Activated CD4-positive, alpha-beta T cell treated with anti-CD3 and anti-CD28 coated beads for 36 hours (primary cell): ENCODE measurements at regions of chr9 and their contacts with region 1.

Region 1: GRCh38 chr9:128786681-128787601 is at the start of gene TBC1D13:
- DNase-seq: peak; percentile 94
- ATAC-seq: peak; percentile 97
- H3K4me3 Mint-ChIP-seq: peak within 1 kb of the TSS; percentile 87
- H3K27ac Mint-ChIP-seq: peak within 1 kb of the TSS; percentile 87
- H3K4me1 Mint-ChIP-seq: peaks cover 18% of the 10 kb centered on the region
- H3K27me3 Mint-ChIP-seq: no peaks in the 10 kb centered on the region
- total RNA-seq, gene TBC1D13: 10.5 to 14.0 TPM

Region 2: GRCh38 chr9:128688512-128689292 is 98.2 kb before region 1 on chr9 and contains the start of gene SET:
- CTCF ChIA-PET with region 1: no interaction called
- POLR2A ChIA-PET with region 1: no interaction called
- intact Hi-C with region 1: loop called in 1 of 2 experiments (anchors 2 kb)
- DNase-seq: peak; percentile 96
- ATAC-seq: peak; percentile 71
- H3K4me3 Mint-ChIP-seq: peak within 1 kb of the TSS; percentile 99
- H3K27ac Mint-ChIP-seq: peak within 1 kb of the TSS; percentile 94
- H3K4me1 Mint-ChIP-seq: peaks cover 61% of the 10 kb centered on the region
- H3K27me3 Mint-ChIP-seq: no peaks in the 10 kb centered on the region
- total RNA-seq, gene SET: 673 to 682 TPM

Region 3: DNA sequence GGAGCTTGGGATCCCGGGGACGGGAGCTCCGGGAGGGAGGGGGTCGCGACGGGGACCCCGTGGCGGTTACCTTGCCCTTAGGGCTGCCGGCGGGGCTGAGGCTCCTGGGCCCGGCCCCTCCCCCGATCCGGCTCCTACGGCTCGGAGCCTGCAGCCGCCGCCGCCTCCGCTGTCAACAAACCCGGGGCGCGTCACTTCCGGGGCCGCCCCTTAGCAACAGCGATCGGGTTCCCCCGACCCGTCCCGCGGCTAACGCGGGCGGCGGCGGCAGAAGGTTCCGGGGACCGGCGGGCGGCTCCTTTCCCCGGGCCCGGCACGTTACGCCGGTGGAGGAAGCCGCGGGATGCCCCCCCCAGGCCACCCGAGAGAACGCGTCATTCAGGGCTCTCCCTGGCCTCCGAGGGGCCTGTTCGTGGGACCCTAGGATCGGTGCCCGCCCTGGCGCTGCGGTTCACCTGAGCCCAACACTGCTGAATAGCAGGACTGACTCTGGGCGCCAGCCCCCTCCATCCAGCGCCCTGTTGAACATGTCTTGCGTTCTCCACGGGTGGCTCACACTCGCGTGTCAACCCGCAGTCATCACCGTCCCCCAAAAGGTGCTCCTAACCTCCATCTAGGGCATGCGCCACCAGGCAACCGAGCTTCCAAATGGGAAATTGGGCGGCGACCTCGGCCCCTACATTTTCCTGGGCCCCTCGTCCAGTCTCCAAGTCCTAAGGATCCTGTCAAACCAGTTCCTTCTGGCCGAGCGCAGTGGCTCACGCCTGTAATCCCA is 15.0 kb before region 1 on chr9 and contains the start of gene ZER1:
- CTCF ChIA-PET with region 1: interaction called, 11 read pairs
- POLR2A ChIA-PET with region 1: interaction called, 3 read pairs
- intact Hi-C with region 1: loop called (anchors 1 kb)
- DNase-seq: peak; percentile 97
- ATAC-seq: peak; percentile 94
- H3K4me3 Mint-ChIP-seq: peak within 1 kb of the TSS; percentile 82
- H3K27ac Mint-ChIP-seq: peak within 1 kb of the TSS; percentile 86
- H3K4me1 Mint-ChIP-seq: peaks cover 18% of the 10 kb centered on the region
- H3K27me3 Mint-ChIP-seq: no peaks in the 10 kb centered on the region
- total RNA-seq, gene ZER1: 17.1 to 19.3 TPM

Region 4: GRCh38 chr9:128887914-128888350 is 101.0 kb after region 1 on chr9:
- CTCF ChIA-PET with region 1: no interaction called
- POLR2A ChIA-PET with region 1: no interaction called
- intact Hi-C with region 1: no loop called
- DNase-seq: no peak
- ATAC-seq: no peak
- H3K4me3 Mint-ChIP-seq: no peak overlapping the region
- H3K27ac Mint-ChIP-seq: peak overlapping the region; percentile 47
- H3K4me1 Mint-ChIP-seq: peaks cover 59% of the 10 kb centered on the region
- H3K27me3 Mint-ChIP-seq: no peaks in the 10 kb centered on the region

Region 5: DNA sequence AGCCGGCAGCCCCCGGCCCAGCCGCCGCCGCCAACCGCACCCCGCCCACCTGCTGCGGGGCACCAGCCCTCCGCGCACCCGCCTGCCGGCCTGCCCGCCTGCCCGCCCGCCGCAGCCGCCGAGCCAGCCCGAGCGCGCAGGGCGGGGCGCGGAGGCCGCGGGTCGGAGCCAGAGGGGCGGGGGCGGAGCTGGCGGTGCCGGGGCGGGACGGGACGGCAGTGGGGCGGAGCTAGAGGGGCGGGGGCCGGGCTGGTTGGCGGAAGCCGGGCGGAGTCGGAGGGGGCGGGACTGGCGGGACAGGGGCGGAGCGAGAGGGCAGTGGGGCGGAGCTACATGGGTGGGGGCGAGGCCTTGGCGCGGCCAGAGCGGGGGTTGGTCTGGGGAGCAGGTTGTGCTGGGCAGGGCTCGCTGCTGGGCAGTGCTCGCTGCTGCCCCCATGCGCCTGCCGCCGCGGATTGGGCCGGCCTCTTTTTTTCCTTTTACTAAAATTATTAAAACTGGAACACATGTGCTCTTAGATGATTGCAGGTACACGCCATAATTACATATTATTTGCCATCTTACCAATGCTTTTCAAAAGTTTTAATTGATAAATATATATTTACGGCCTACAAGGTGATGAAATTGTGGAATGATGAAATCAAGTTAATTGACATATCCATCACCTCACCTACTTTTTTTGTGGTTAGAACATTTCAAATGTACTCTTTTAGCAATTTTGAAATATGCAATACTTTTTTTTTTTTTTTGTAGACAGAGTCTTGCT is 241.4 kb after region 1 on chr9 and contains the start of gene SH3GLB2:
- CTCF ChIA-PET with region 1: no interaction called
- POLR2A ChIA-PET with region 1: no interaction called
- intact Hi-C with region 1: loop called in 1 of 2 experiments (anchors 5 kb)
- DNase-seq: peak; percentile 98
- ATAC-seq: peak; percentile 93
- H3K4me3 Mint-ChIP-seq: peak within 1 kb of the TSS; percentile 81
- H3K27ac Mint-ChIP-seq: peak within 1 kb of the TSS; percentile 52
- H3K4me1 Mint-ChIP-seq: peaks cover 17% of the 10 kb centered on the region
- H3K27me3 Mint-ChIP-seq: no peaks in the 10 kb centered on the region
- total RNA-seq, gene SH3GLB2: 49.1 to 53.7 TPM